AG04449 (cell line): ENCODE measurements at regions of chr22 and their contacts with region 1.

Region 1: GRCh38 chr22:45863981-45864751 is 112.8 kb downstream of the WNT7B start:
- DNase-seq: no peak
- H3K4me3 ChIP-seq: no peak overlapping the region
- CTCF ChIP-seq: peak; percentile 88

Region 2: DNA sequence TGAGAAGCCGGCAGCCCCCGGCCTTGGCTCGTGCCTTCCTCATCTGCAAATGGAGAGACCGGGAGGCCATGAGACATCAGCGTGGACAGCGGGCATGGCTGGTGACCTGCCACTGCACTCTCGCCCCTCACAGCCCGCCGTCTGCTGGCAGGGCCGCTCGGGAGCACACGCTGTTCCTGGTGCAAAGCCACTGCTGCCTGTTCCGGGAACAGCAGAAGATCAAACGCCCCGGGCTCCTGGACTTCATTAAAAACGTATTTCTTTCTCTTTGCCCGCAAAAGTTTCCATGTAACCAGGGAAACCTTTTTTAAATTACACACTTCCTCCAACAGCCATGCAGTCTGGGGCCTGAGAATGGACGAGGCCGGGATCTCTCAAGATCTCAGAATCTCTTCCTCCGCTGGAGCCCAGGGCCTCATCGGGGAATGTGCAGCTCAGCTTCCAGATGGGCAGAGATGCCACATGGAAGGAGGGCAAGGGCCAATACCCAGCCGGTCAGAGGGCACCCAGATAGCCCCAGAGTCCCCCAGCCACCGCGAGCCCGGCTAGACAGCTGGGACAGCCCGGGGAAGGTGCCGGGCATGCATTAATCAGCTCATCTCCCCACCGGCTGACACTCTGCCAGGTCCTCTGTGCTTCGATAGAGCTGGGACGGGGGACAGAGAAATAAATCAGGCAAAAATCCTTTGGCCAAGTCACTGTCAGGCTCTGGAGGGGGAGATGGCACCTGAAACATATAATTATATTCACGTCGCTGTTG is 1225.0 kb before region 1 on chr22:
- CTCF ChIA-PET with region 1: no interaction called
- POLR2A ChIA-PET with region 1: no interaction called
- DNase-seq: no peak
- H3K4me3 ChIP-seq: no peak overlapping the region
- CTCF ChIP-seq: no peak

Region 3: GRCh38 chr22:45638834-45639746 is 225.1 kb before region 1 on chr22:
- CTCF ChIA-PET with region 1: interaction called, 13 read pairs
- POLR2A ChIA-PET with region 1: no interaction called
- DNase-seq: no peak
- H3K4me3 ChIP-seq: no peak overlapping the region
- CTCF ChIP-seq: no peak

Region 4: DNA sequence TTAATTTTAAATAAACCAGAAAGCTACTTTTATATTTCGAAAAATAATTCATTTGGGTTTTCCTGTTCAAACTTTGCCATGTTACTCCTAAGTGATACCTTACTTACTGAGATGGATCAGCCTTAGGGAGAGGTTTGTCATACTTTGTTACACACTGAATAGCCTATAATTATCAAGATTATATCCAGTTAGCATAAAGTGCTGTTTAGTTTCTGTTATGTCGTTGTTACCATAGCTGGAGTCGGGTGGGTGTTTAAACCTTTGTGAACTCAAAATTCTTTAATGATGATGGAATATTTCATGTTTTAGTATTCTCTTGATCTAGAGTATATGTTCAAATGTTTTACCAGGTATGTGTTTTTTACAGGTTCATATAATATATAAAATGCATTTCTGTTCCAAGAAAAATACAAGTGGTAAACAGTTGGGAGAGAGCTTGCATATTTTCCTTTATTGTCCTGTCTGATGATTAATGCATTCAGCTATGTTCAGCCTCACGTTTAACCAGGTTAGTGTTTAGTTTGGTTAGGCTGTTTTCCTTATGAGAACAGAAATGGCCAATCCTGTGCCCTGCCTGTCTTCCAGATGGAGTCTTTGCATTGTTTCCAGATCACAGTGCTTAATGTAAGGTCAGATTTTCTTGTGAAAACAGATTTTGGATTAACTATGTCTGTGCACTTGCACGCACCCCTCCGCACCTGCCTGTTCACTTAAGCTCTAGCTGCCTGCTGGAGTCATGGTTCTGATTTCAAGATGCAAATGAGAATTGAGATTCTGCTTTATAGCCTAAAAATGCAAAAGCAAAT is 86.9 kb before region 1 on chr22:
- CTCF ChIA-PET with region 1: interaction called, 12 read pairs
- POLR2A ChIA-PET with region 1: no interaction called
- DNase-seq: peak; percentile 29
- H3K4me3 ChIP-seq: no peak overlapping the region
- CTCF ChIP-seq: no peak

Region 5: DNA sequence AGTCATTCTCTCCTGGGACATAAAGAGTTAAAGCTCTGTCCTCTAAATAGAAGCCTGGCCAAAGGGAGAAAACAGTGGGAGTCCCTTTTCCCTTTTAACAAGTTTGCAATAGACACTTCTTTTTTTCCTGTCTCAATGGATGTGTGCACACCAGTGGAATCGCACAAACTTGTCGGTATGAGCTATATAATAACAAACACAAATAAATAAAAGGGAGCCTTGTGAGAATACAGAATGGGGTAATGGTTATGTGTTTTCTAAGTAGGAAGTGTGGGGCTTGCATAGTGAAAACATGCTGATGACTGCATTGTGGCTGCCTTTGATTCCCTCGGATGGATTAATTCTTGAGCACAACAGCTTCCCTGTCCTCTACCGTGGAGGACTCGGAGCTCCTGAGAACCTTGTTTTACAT is 19.1 kb before region 1 on chr22:
- CTCF ChIA-PET with region 1: interaction called, 66 read pairs
- POLR2A ChIA-PET with region 1: no interaction called
- DNase-seq: no peak
- H3K4me3 ChIP-seq: no peak overlapping the region
- CTCF ChIP-seq: no peak

Region 6: DNA sequence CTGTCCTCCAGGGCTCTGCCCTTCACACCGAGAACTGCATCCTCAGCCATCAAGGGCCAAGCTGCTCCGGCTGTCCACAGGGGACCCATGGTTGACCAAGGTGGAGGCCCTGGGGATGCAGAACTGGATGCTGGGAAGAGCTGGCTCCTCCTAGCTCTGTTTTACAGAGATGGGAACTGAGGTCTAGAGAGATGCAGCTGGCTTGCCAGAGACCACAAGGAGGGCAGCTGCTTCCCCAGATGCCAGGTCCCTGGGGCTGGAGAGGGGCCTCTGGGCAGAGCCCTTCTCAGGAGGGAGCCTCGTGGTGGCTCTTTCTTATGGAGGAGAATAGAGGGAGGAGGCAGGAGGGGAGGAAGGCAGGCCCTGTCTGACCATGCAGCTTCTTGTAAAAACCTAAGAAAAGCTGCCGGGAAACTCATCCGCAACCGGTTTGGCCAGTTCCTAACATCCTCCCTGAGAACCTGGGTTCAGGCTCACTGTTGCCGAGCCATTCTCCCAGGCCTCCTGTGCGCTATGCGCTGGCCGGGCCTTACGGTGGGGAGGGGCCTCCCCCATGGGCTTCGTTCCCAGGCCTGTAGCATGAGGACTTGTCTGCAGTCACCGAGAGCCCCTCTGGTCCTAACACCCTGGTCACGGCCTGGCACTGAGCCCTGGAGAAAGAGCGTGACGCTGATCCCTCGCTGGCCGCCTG is 32.2 kb after region 1 on chr22:
- CTCF ChIA-PET with region 1: interaction called, 16 read pairs
- POLR2A ChIA-PET with region 1: no interaction called
- DNase-seq: no peak
- H3K4me3 ChIP-seq: no peak overlapping the region
- CTCF ChIP-seq: no peak

Region 7: DNA sequence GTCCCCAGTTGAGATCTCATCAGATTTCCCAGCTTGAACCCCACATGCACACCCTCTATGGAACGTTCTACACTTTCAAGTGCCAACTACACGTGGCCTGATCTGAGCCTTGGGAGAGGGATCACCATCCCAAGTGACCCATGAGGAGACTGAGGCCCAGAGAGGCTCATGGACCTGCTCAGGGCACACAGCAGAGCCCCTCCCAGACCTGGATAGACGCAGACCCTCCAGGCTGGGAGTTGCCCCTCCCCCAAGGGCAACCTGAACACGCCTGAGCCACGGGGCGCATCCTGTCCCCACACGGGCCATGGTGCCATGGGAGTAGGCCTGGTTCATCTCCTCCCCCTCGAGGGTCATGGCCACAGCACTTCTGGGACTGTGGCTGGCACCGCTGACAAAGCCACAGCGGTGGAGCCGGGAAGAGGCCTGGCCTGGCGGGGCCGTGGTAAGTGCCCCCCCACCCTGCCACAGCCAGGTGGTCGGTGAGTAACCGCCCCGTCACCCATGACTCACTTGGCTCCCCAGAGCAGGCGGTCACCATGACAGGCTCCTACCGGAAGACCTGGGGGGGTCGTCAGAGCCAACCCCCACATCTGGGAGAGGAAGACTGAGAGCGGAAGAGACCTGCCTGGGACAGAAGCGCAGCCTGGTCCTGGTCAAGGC is 104.7 kb after region 1 on chr22:
- CTCF ChIA-PET with region 1: interaction called, 33 read pairs
- POLR2A ChIA-PET with region 1: interaction called, 4 read pairs
- DNase-seq: peak; percentile 12
- H3K4me3 ChIP-seq: no peak overlapping the region
- CTCF ChIP-seq: no peak